GM12878 (cell line): ENCODE measurements at regions of chr2 and their contacts with region 1.

Region 1: DNA sequence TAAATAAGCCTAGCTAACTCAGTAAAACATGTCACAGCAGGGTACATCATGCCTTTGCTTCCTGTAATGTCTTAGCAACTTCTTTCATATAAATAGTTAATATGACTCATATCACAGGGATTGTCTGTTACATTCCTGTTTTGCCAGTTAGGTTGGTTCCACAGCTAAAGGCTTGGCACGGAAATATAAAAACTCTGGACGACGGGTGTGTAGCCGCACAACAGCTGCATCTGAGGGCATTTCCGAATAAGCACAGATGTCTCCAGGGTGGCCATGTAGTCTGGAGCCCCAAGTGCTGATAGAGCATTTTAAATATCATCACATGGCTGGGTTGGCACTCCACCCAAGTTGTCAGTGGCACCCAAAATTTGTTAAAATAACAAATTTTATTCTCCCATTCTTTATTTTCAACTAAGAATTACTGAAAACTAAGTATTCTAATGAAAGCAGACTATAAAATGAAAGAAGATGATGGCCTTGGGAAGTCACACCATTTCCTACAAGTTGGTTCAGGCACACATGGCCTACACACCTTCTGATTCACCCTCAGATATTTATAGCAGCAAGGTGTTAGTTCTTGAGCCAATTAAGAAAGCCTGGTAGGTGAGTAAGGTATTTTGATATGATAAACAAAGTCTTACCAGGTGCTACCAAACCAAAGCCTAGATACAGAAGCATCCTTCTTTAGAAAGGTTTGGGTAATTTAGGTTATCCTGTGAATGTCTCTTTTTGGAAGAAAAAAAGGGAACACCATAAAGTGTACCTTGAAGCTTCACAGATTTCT is 61.8 kb upstream of the STK17B start:
- DNase-seq: no peak
- ATAC-seq: peak; percentile 26
- H3K4me3 ChIP-seq: no peak overlapping the region
- H3K27ac ChIP-seq: peak overlapping the region; percentile 50; the same call in 1 of the 2 replicates
- H3K4me1 ChIP-seq: peaks cover 14% of the 10 kb centered on the region
- H3K27me3 ChIP-seq: no peaks in the 10 kb centered on the region
- CTCF ChIP-seq: no peak
- EP300 ChIP-seq: no peak
- POLR2A ChIP-seq: no peak
- RAD21 ChIP-seq: no peak

Region 2: GRCh38 chr2:196160101-196160500 is 73.1 kb before region 1 on chr2:
- CTCF ChIA-PET with region 1: interaction called, 9 read pairs
- POLR2A ChIA-PET with region 1: interaction called, 10 read pairs
- RAD21 ChIA-PET with region 1: interaction called, 22 read pairs
- SMC1A ChIA-PET with region 1: interaction called, 34 read pairs
- in situ Hi-C with region 1: no loop called
- intact Hi-C with region 1: no loop called
- DNase-seq: peak; percentile 86
- ATAC-seq: peak; percentile 64
- H3K4me3 ChIP-seq: no peak overlapping the region; the same call in 1 of the 2 replicates
- H3K27ac ChIP-seq: peak overlapping the region; percentile 77
- H3K4me1 ChIP-seq: peaks cover 29% of the 10 kb centered on the region
- H3K27me3 ChIP-seq: no peaks in the 10 kb centered on the region
- CTCF ChIP-seq: no peak
- EP300 ChIP-seq: peak; percentile 93
- POLR2A ChIP-seq: no peak
- RAD21 ChIP-seq: peak; percentile 17; the same call in 1 of the 2 replicates

Region 3: DNA sequence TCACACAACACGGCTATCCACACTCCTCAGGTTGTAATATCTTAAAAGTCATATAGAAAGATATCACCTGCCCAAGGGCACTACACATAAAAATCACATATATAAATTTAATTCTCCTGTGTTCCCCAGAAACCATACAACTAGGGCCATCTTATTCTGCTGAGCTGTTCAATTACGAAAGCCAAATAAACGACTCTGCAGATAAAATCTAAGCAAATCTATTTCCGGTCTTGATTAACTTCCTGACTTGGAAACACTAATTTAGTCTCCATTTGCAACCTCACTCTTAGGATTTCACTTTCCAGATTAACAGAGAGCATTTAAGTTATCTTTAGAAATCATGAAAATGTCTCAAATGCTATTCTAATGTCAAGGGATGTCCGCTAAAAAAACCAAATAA is 37.9 kb before region 1 on chr2:
- CTCF ChIA-PET with region 1: interaction called, 4 read pairs
- POLR2A ChIA-PET with region 1: interaction called, 7 read pairs
- RAD21 ChIA-PET with region 1: interaction called, 34 read pairs
- SMC1A ChIA-PET with region 1: interaction called, 36 read pairs
- in situ Hi-C with region 1: no loop called
- intact Hi-C with region 1: no loop called
- DNase-seq: no peak
- ATAC-seq: no peak
- H3K4me3 ChIP-seq: no peak overlapping the region
- H3K27ac ChIP-seq: no peak overlapping the region
- H3K4me1 ChIP-seq: no peaks in the 10 kb centered on the region
- H3K27me3 ChIP-seq: no peaks in the 10 kb centered on the region
- CTCF ChIP-seq: no peak
- EP300 ChIP-seq: no peak
- POLR2A ChIP-seq: no peak
- RAD21 ChIP-seq: no peak

Region 4: DNA sequence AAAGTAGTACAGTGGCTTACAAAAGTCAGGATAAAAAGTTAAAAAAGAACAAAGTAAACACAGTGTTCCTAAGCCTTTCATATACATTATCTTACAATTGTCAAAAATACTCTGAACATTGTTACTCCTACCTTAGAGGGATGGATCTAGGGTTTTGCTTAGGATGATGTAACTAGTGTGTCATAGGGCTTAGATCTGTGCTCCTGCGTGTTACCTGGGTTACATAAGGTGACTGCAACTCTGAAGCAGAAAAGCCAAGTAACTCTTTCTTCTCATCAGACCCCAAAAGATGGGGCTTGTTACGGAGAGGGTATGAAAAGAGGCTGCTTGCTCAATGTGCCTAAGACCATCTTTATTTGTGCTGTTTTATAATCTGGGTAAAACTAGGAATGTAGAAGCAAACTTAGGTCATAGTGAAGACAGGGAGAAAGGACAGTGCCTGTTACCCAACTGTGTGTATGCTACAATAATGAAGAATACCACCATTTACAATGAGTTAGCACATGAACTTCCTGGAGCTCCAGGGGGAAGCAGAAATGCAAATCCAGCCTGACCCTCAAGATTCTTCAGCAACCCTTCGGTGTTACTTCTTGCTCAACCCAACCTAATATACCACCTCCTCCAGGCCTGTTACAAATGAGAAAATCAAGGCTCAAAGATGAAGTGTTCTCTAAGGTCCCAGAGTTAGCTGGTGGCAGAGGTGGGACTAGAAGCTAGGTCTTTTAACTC is 19.8 kb before region 1 on chr2:
- CTCF ChIA-PET with region 1: interaction called, 37 read pairs
- POLR2A ChIA-PET with region 1: interaction called, 16 read pairs
- RAD21 ChIA-PET with region 1: interaction called, 17 read pairs
- SMC1A ChIA-PET with region 1: interaction called, 95 read pairs
- in situ Hi-C with region 1: no loop called
- intact Hi-C with region 1: loop called (anchors 2 kb)
- DNase-seq: no peak
- ATAC-seq: no peak
- H3K4me3 ChIP-seq: no peak overlapping the region
- H3K27ac ChIP-seq: no peak overlapping the region
- H3K4me1 ChIP-seq: peaks cover 14% of the 10 kb centered on the region
- H3K27me3 ChIP-seq: no peaks in the 10 kb centered on the region
- CTCF ChIP-seq: no peak
- EP300 ChIP-seq: no peak
- POLR2A ChIP-seq: no peak
- RAD21 ChIP-seq: no peak

Region 5: DNA sequence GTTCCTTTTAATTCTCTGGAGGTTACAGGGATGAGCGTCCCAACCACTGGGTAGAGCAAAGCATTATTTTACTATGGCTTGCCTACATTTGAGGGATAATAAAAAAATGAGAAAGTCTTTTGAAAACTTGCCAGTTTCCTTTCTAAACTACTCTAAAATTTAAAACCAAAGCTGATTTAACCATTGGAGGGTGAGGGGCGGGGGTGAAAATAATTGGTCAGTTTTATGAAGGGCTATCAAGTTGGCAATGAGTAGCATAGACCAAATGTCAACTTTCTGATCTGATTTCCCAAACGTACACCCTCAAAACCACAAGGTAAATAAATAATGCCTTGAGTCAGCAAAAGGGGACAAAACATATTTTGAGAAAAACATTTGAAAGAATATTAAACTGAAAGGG is 23.9 kb after region 1 on chr2:
- CTCF ChIA-PET with region 1: interaction called, 5 read pairs
- POLR2A ChIA-PET with region 1: interaction called, 7 read pairs
- RAD21 ChIA-PET with region 1: interaction called, 8 read pairs
- SMC1A ChIA-PET with region 1: interaction called, 56 read pairs
- in situ Hi-C with region 1: no loop called
- intact Hi-C with region 1: no loop called
- DNase-seq: no peak
- ATAC-seq: no peak
- H3K4me3 ChIP-seq: no peak overlapping the region
- H3K27ac ChIP-seq: no peak overlapping the region
- H3K4me1 ChIP-seq: no peaks in the 10 kb centered on the region
- H3K27me3 ChIP-seq: no peaks in the 10 kb centered on the region
- CTCF ChIP-seq: no peak
- EP300 ChIP-seq: no peak
- POLR2A ChIP-seq: no peak
- RAD21 ChIP-seq: no peak